PC-3 (cell line): ENCODE measurements at regions of chr7 and their contacts with region 1.

Region 1: GRCh38 chr7:106216517-106216922 is 68.3 kb downstream of the NAMPT start:
- DNase-seq: peak; percentile 99
- ATAC-seq: peak; percentile 90
- H3K4me3 ChIP-seq: peak overlapping the region; percentile 56
- H3K27ac ChIP-seq: peak overlapping the region; percentile 83
- H3K4me1 ChIP-seq: peaks cover 26% of the 10 kb centered on the region
- H3K27me3 ChIP-seq: no peaks in the 10 kb centered on the region
- CTCF ChIP-seq: no peak

Region 2: DNA sequence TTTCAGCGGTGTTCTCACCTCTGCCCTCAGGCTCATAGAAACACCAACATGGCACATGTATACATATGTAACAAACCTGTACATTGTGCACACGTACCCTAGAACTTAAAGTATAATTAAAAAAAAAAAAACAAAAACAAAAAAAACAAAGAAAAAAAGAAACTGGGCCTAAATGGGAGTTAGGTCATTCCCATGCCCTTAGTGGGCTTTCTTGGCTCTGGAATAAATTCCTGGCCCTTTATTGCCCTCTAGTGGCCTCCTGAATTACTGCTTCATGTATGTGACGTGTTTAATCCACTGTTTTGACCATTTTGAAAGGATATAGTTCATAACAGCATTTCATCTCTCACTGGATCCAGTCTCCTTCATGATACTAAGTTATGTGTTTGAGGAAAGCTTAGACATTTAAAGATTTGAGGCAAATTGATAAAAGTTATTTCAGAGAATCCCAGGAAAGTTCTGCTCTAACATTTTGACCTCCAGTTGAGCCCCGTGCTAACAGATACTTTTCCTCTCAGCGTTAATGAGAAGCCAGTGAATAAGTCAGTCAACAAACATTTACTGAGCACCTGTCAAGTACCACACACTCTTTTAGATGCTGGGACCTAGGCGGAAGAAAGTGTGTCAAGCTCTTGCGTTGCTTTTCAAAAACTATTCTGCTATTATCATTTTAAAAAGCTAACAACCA is 49.7 kb before region 1 on chr7:
- CTCF ChIA-PET with region 1: no interaction called
- POLR2A ChIA-PET with region 1: no interaction called
- intact Hi-C with region 1: no loop called
- DNase-seq: peak; percentile 94
- ATAC-seq: peak; percentile 79
- H3K4me3 ChIP-seq: no peak overlapping the region
- H3K27ac ChIP-seq: no peak overlapping the region
- H3K4me1 ChIP-seq: no peaks in the 10 kb centered on the region; the same call in 1 of the 2 replicates
- H3K27me3 ChIP-seq: no peaks in the 10 kb centered on the region
- CTCF ChIP-seq: peak; percentile 96

Region 3: DNA sequence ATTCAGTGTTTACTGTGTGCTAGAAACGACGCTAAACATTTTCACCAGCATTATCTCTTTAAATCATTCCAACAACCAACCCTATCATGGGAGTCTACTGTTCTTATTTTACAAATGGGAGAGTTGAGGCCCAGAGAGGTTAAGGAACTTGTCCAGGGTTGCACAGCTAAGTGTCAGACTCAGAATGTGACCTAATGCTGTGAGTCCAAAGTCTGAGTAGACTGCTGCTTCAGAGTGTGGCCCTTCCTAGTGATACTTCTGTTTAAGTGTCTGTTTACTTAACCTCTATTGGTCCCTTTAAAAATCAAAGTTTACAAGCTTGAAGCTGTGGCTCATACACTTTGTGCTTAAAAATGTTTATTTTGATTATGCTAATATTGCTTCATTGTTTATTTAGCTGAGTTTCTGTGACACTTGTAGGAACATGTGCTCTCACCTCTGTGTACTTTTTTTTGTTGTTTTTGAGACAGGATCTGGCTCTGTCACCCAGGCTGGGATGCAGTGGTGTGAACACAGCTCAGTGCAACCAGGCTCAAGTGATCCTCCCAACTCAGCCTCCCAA is 20.0 kb before region 1 on chr7:
- CTCF ChIA-PET with region 1: no interaction called
- POLR2A ChIA-PET with region 1: no interaction called
- intact Hi-C with region 1: loop called (anchors 1 kb)
- DNase-seq: peak; percentile 41
- ATAC-seq: peak; percentile 92
- H3K4me3 ChIP-seq: no peak overlapping the region
- H3K27ac ChIP-seq: no peak overlapping the region
- H3K4me1 ChIP-seq: no peaks in the 10 kb centered on the region
- H3K27me3 ChIP-seq: no peaks in the 10 kb centered on the region
- CTCF ChIP-seq: no peak

Region 4: GRCh38 chr7:106205621-106206222 is 10.8 kb before region 1 on chr7:
- CTCF ChIA-PET with region 1: no interaction called
- POLR2A ChIA-PET with region 1: interaction called, 20 read pairs
- intact Hi-C with region 1: no loop called
- DNase-seq: no peak
- ATAC-seq: peak; percentile 51
- H3K4me3 ChIP-seq: no peak overlapping the region
- H3K27ac ChIP-seq: no peak overlapping the region
- H3K4me1 ChIP-seq: no peaks in the 10 kb centered on the region
- H3K27me3 ChIP-seq: no peaks in the 10 kb centered on the region
- CTCF ChIP-seq: no peak